Activated CD4-positive, alpha-beta T cell treated with anti-CD3 and anti-CD28 coated beads, Interleukin-2, amount 10 ng/mL, durations not matched to agents 7 days and 5 days (primary cell): ENCODE measurements at regions of chr10 and their contacts with region 1.

Region 1: GRCh38 chr10:4067531-4067930 is 282.5 kb upstream of the KLF6 start:
- DNase-seq: no peak
- H3K4me3 Mint-ChIP-seq: no peak overlapping the region
- H3K27ac Mint-ChIP-seq: no peak overlapping the region
- H3K4me1 Mint-ChIP-seq: peaks cover 8% of the 10 kb centered on the region
- H3K27me3 Mint-ChIP-seq: no peaks in the 10 kb centered on the region

Region 2: DNA sequence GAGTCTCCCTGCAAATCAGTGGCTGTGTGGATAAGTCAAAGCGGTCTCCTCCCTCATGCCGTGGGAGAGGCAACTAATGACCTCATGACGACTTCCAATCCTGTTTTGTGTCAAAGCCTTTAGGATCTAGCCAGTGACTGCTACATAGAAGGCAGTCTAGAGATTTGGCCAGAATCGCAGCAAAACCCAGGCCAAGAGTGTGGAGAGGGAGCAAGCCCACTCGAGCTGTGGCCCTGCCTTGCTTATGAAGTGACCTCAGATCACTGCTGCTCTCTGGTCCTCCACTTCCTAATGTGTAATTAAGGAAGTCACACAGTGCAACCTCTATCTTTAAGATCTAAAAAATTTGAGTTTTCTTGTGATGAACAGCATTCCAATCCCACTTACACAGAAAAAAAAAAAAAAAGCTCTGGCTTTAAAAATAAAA is 14.2 kb after region 1 on chr10:
- CTCF ChIA-PET with region 1: interaction called, 10 read pairs
- POLR2A ChIA-PET with region 1: no interaction called
- DNase-seq: no peak
- H3K4me3 Mint-ChIP-seq: no peak overlapping the region
- H3K27ac Mint-ChIP-seq: peak overlapping the region; percentile 2
- H3K4me1 Mint-ChIP-seq: peaks cover 38% of the 10 kb centered on the region
- H3K27me3 Mint-ChIP-seq: no peaks in the 10 kb centered on the region

Region 3: DNA sequence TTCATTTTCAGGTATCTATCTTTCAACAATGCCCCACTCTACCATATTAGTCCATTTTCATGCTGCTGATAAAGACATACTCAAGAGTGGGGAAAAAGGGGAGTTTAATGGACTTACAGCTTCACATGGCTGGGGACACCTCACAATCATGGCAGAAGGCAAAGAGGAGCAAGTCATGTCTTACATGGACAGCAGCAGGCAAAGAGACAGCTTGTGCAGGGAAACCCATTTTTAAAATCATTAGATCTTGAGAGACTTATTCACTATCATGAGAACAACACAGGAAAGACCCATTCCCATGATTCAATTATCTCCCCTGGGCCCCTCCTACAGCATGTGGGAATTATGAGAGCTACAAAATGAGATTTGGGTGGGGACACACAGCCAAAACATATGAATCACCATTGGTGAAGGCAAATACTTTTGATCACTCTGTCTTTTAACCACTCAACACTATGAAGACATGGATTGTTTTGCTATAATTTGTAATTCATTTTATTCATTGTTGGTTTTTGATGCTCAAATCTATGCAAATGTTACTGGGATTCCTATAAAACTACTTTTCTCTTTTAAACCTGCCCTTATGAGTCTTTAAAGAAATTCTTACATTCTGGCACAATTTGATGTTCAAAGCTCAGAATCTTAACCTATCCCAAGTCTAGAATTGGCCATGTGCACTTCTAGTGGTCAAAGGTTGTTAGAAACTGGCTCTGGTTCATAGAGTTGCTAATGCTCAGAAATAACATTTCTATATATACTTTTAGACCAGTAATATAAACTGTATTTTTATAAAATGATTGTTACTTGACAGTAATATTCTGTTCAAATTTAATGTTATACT is 1144.4 kb after region 1 on chr10:
- CTCF ChIA-PET with region 1: no interaction called
- POLR2A ChIA-PET with region 1: no interaction called
- DNase-seq: no peak
- H3K4me3 Mint-ChIP-seq: no peak overlapping the region
- H3K27ac Mint-ChIP-seq: no peak overlapping the region
- H3K4me1 Mint-ChIP-seq: peaks cover 4% of the 10 kb centered on the region
- H3K27me3 Mint-ChIP-seq: peaks cover 13% of the 10 kb centered on the region